ENCODE measurements at regions of chr14 and their contacts with region 1.

Region 1: DNA sequence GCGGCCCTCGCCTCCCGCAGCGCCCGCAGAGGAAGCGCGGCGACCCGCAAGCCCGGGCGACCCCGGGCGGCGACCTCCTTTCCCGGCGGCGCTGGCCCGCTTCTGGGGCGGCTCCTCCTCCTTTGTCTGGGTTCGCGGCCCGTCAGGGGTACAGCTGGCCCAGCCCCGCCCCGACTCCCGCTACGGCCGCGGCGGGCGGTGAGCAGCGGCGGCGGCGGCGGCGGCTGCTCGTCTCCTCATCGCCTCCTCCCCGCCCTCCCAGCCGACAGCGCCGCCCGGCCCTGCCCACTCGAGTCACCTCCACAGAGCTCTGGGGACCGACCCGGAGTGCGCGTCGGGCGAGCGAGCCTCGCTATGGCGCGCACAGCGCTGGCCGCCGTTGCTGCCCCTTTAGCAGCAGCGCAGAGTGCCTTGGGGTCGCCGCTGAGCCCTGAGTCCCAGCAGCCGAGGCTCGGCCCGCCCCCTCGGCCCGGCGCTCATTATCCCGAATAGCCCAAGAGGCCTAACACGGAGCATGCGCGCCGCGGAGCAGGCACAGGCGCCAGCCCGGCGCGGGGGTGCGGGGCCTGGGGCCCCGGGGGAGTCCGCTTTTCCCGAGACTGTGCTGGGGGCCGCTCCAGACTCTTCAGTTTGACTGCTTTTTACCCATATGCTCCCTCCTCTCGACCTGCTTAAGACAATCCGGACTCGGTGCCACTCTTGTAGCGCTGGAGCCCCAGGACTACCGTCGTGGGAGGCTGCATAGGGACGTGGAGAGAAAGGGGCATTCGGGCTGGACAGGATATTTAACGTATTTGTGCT is at the start of gene SOS2:
- DNase-seq: peak; percentile 90
- ATAC-seq: peak; percentile 78
- H3K4me3 Mint-ChIP-seq: peak within 1 kb of the TSS; percentile 78
- H3K27ac Mint-ChIP-seq: peak within 1 kb of the TSS; percentile 85
- H3K4me1 Mint-ChIP-seq: peaks cover 39% of the 10 kb centered on the region
- H3K27me3 Mint-ChIP-seq: no peaks in the 10 kb centered on the region
- total RNA-seq, gene SOS2: 20.2 to 20.9 TPM

Region 2: GRCh38 chr14:49633640-49634546 is 597.8 kb before region 1 on chr14:
- CTCF ChIA-PET with region 1: no interaction called
- POLR2A ChIA-PET with region 1: no interaction called
- intact Hi-C with region 1: loop called in 1 of 2 experiments (anchors 5 kb)
- DNase-seq: peak; percentile 98
- ATAC-seq: peak; percentile 88
- H3K4me3 Mint-ChIP-seq: peak overlapping the region; percentile 98
- H3K27ac Mint-ChIP-seq: peak overlapping the region; percentile 95
- H3K4me1 Mint-ChIP-seq: peaks cover 46% of the 10 kb centered on the region
- H3K27me3 Mint-ChIP-seq: no peaks in the 10 kb centered on the region

Region 3: GRCh38 chr14:49786315-49787110 is 445.2 kb before region 1 on chr14:
- CTCF ChIA-PET with region 1: no interaction called
- POLR2A ChIA-PET with region 1: no interaction called
- intact Hi-C with region 1: no loop called
- DNase-seq: no peak
- ATAC-seq: no peak
- H3K4me3 Mint-ChIP-seq: no peak overlapping the region
- H3K27ac Mint-ChIP-seq: no peak overlapping the region
- H3K4me1 Mint-ChIP-seq: no peaks in the 10 kb centered on the region
- H3K27me3 Mint-ChIP-seq: no peaks in the 10 kb centered on the region

Region 4: DNA sequence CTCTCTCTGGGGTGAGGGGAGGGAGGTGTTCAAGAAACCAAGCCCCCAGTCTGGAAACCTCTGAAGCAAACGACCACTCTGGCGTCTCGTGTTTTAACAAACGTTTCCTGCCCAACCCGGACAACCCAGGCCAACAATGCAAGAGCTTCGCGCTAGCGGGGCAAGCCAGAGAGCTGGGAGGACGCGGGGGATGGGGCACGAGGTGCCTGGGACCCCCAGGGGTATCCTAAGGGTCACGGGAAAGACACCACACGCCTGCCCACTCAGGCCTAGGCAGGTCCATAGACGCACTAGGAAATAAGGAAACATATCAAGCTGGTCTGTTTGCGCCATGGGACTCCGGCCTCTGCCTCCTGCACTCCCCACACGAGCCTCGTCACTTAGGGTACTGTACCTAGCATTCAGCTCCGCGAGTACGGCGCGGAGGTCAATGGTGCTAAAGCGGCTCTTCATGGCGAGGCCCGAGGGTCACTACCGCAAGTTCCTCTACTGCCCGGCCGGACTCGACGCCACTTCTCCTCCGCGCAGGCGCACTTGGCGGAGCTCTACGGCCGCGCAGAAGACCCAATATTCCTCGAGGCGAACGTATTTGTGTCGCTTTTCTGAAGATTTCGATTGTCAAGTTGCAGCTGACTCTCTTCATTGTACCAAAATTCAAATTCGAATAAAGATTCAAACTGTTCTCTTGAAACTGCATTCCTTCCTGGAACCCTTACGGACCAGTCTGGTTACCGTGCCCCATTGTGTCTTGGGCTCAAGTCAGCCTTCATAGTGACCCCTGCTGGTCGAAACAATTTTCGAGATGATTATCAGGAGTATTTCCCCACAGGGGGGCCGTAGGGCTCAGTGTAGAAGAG is 379.1 kb before region 1 on chr14 and contains the start of gene NEMF:
- CTCF ChIA-PET with region 1: interaction called, 3 read pairs
- POLR2A ChIA-PET with region 1: interaction called, 3 read pairs
- intact Hi-C with region 1: loop called in 1 of 2 experiments (anchors 2 kb)
- DNase-seq: peak; percentile 86
- ATAC-seq: peak; percentile 79
- H3K4me3 Mint-ChIP-seq: peak within 1 kb of the TSS; percentile 97
- H3K27ac Mint-ChIP-seq: peak within 1 kb of the TSS; percentile 98
- H3K4me1 Mint-ChIP-seq: peaks cover 39% of the 10 kb centered on the region
- H3K27me3 Mint-ChIP-seq: no peaks in the 10 kb centered on the region
- total RNA-seq, gene NEMF: 62.4 to 97.9 TPM

Region 5: DNA sequence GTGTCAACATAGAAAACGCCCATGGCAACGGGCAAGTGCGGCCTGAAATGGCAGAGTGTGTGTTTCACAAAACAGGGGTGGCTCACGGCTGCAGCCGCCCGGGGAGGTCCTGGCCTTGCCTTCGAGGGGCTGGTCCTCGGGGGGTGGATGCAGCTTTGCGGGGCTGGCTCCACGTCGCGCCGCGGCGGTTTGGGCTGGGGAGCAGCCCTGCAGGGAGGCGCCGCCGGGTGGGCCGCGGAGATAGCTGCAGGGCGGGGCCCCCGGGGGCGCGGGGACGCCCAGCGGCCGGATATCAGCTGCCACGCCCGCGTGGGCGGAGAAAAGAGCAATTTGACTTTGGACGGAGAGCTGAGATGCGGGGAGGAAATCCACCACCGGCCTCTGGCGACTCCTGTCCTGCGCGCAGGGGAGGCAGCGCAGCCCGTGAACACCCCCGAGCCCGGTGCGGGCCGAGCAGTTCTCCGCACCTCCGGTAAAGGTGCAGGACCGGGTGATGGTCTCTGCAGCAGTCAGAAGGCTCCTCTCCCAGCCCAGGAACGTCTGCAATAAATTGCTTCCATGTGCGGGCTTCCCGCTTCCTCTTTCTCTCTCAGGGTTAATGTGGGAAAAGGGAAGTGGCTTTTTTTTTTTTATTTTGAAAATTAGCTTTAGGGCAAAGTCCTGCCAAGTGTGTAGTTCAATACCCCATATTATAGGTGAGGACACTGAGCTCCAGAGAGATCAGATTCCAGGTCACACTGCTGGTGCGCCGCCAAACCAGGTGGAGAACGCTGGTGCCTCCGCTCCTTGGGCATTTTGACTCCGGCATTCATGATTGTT is 228.3 kb before region 1 on chr14:
- CTCF ChIA-PET with region 1: no interaction called
- POLR2A ChIA-PET with region 1: interaction called, 3 read pairs
- intact Hi-C with region 1: loop called in 1 of 2 experiments (anchors 1 kb)
- DNase-seq: peak; percentile 90
- ATAC-seq: peak; percentile 2
- H3K4me3 Mint-ChIP-seq: peak overlapping the region; percentile 75
- H3K27ac Mint-ChIP-seq: peak overlapping the region; percentile 98
- H3K4me1 Mint-ChIP-seq: peaks cover 56% of the 10 kb centered on the region
- H3K27me3 Mint-ChIP-seq: no peaks in the 10 kb centered on the region

Region 6: GRCh38 chr14:50116181-50116956 is 115.3 kb before region 1 on chr14 and contains the start of gene VCPKMT:
- CTCF ChIA-PET with region 1: interaction called, 4 read pairs
- POLR2A ChIA-PET with region 1: interaction called, 3 read pairs
- intact Hi-C with region 1: loop called (anchors 1 to 2 kb)
- DNase-seq: peak; percentile 98
- ATAC-seq: peak; percentile 99
- H3K4me3 Mint-ChIP-seq: peak within 1 kb of the TSS; percentile 95
- H3K27ac Mint-ChIP-seq: peak within 1 kb of the TSS; percentile 97
- H3K4me1 Mint-ChIP-seq: peaks cover 25% of the 10 kb centered on the region
- H3K27me3 Mint-ChIP-seq: no peaks in the 10 kb centered on the region
- total RNA-seq, gene VCPKMT: 6.6 to 10.4 TPM

Region 7: GRCh38 chr14:50342221-50343078 is 110.8 kb after region 1 on chr14:
- CTCF ChIA-PET with region 1: no interaction called
- POLR2A ChIA-PET with region 1: no interaction called
- intact Hi-C with region 1: loop called in 1 of 2 experiments (anchors 1 kb)
- DNase-seq: peak; percentile 76
- ATAC-seq: no peak
- H3K4me3 Mint-ChIP-seq: no peak overlapping the region
- H3K27ac Mint-ChIP-seq: no peak overlapping the region
- H3K4me1 Mint-ChIP-seq: peaks cover 30% of the 10 kb centered on the region
- H3K27me3 Mint-ChIP-seq: peaks cover 3% of the 10 kb centered on the region

Region 8: GRCh38 chr14:50532502-50533240 is 301.0 kb after region 1 on chr14 and contains the start of gene MAP4K5:
- CTCF ChIA-PET with region 1: no interaction called
- POLR2A ChIA-PET with region 1: no interaction called
- intact Hi-C with region 1: loop called in 1 of 2 experiments (anchors 1 kb)
- DNase-seq: peak; percentile 94
- ATAC-seq: peak; percentile 96
- H3K4me3 Mint-ChIP-seq: peak within 1 kb of the TSS; percentile 90
- H3K27ac Mint-ChIP-seq: peak within 1 kb of the TSS; percentile 86
- H3K4me1 Mint-ChIP-seq: peaks cover 47% of the 10 kb centered on the region
- H3K27me3 Mint-ChIP-seq: no peaks in the 10 kb centered on the region
- total RNA-seq, gene MAP4K5: 19.1 to 31.2 TPM

Measured in activated CD4-positive, alpha-beta T cell treated with anti-CD3 and anti-CD28 coated beads for 36 hours (primary cell).